Left colon (tissue), 2 donors: ENCODE measurements at regions of chr13 and their contacts with region 1.

Region 1: DNA sequence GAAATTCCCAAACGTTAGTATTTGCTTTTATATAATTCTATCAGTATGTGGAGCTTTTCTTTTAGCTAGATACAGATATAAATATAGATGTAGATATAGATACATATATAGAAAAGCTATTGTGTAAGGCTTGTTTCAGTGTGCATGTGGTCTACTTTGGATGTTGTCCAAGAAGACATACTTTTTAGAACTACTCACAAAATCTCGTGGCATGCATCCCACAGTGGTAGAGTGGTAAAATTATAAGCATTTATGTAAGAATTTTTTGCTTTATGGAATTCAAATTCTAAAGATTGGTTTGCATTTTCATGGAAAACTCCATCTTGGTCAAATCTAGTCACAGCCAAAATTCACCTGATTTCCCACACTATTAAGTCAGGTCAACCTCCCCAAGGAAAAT is 880.4 kb downstream of the EFNB2 start:
- DNase-seq: no peak
- ATAC-seq: no peak

Region 2: GRCh38 chr13:105410602-105411001 is 244.4 kb before region 1 on chr13:
- intact Hi-C with region 1: loop called in 1 of 2 experiments (anchors 5 kb)
- DNase-seq: peak; percentile 25 to 71
- ATAC-seq: no peak

Region 3: DNA sequence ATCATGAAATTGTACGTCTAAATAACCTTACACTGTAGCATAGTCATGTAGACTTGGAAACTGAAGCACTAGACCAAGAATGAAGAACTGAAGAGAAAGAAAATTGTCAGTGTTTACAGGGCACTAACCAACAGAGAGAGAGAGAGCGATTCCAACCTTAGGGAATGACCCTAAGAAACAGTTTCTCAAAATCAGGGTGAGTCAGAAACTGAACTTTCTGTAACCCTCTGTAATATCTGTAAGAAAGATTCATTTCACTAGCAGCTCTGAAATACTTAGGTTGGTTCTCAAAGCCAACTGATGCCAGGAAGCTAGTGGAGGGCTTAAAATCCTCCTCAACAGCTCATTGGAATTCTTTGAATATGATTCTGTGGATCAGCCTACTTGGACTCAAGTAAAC is 56.5 kb before region 1 on chr13:
- intact Hi-C with region 1: no loop called
- DNase-seq: no peak
- ATAC-seq: no peak